MCF 10A (cell line): ENCODE measurements at regions of chr11 and their contacts with region 1.

Region 1: DNA sequence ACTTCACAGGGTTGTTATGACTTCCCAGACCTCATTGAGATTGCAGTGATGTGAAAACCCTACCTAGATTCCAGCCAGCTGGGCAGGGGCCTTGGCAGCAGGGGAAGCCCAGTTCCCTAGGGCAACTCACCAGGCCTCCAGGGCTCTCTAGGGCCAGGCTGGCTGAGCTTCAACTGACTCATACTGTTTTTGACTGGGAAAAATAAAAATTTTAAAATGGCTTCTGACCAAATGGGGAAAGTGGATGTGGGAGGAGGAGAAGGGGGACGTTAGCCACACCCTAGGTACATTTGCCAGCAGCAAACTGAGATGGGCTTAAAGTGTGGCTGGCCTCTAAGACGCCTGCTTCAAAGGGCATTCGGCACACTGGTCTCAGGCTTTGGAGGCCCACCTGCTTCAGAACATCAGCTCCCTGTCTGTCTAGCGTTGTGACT is 39.0 kb downstream of the BMAL1 start:
- DNase-seq: peak; percentile 85
- H3K4me3 Mint-ChIP-seq: no peak overlapping the region
- H3K27ac Mint-ChIP-seq: peak overlapping the region; percentile 87
- H3K4me1 Mint-ChIP-seq: peaks cover 64% of the 10 kb centered on the region
- H3K27me3 Mint-ChIP-seq: no peaks in the 10 kb centered on the region
- CTCF ChIP-seq: no peak

Region 2: DNA sequence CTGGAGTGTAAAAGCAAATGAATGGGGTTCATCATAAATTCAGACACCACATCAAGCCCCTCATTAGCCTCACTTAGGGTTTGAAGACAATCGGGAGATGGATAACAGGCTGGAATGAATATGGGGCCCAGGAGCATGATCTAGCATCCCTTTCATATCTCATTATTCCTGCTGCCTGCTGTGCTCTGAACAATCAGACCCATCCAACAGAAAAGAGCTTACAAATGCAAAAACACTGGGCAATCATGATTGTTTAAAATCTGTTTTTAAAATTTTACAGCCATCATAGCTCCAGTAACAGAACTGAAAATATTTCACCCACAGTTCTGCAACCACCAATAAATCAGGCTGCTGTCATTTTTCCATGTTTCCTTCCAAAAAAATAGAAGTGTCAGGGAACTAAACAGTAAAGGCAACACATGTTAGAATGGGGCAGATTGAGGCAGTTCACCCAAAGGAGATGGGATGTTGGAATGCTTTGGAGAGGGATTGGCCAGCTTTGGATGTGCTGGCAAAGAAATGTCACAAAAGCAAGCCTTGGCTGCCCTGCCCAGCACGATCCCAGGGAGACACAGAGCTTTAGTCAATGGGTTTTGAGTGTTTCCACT is 86.7 kb before region 1 on chr11:
- CTCF ChIA-PET with region 1: no interaction called
- POLR2A ChIA-PET with region 1: no interaction called
- intact Hi-C with region 1: no loop called
- DNase-seq: no peak
- H3K4me3 Mint-ChIP-seq: no peak overlapping the region
- H3K27ac Mint-ChIP-seq: no peak overlapping the region
- H3K4me1 Mint-ChIP-seq: peaks cover 6% of the 10 kb centered on the region
- H3K27me3 Mint-ChIP-seq: no peaks in the 10 kb centered on the region
- CTCF ChIP-seq: no peak

Region 3: DNA sequence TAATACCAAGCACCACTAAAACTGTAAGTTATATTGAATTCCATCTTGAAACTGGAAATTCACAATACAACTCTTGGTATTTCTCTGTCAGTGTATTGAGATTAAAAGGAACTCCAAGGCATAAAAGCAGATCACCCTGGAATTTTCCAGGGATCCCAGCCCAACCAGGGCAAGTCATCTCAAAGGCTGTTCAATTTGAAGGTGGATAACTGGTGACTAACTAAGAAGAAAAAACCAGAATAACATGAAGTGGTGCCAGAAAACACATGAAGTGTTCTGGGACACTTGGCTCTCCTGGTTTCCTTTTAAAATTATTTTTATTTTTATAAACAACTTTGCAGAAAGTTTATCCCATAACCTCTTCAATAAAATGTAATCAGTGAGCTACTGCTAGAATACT is 46.8 kb before region 1 on chr11:
- CTCF ChIA-PET with region 1: no interaction called
- POLR2A ChIA-PET with region 1: interaction called, 10 read pairs
- intact Hi-C with region 1: no loop called
- DNase-seq: peak; percentile 40
- H3K4me3 Mint-ChIP-seq: no peak overlapping the region
- H3K27ac Mint-ChIP-seq: peak overlapping the region; percentile 35
- H3K4me1 Mint-ChIP-seq: peaks cover 31% of the 10 kb centered on the region
- H3K27me3 Mint-ChIP-seq: no peaks in the 10 kb centered on the region
- CTCF ChIP-seq: no peak

Region 4: GRCh38 chr11:13329670-13330356 is 13.3 kb after region 1 on chr11:
- CTCF ChIA-PET with region 1: interaction called, 29 read pairs
- POLR2A ChIA-PET with region 1: interaction called, 13 read pairs
- intact Hi-C with region 1: no loop called
- DNase-seq: peak; percentile 62
- H3K4me3 Mint-ChIP-seq: no peak overlapping the region
- H3K27ac Mint-ChIP-seq: peak overlapping the region; percentile 8
- H3K4me1 Mint-ChIP-seq: peaks cover 44% of the 10 kb centered on the region
- H3K27me3 Mint-ChIP-seq: no peaks in the 10 kb centered on the region
- CTCF ChIP-seq: no peak

Region 5: DNA sequence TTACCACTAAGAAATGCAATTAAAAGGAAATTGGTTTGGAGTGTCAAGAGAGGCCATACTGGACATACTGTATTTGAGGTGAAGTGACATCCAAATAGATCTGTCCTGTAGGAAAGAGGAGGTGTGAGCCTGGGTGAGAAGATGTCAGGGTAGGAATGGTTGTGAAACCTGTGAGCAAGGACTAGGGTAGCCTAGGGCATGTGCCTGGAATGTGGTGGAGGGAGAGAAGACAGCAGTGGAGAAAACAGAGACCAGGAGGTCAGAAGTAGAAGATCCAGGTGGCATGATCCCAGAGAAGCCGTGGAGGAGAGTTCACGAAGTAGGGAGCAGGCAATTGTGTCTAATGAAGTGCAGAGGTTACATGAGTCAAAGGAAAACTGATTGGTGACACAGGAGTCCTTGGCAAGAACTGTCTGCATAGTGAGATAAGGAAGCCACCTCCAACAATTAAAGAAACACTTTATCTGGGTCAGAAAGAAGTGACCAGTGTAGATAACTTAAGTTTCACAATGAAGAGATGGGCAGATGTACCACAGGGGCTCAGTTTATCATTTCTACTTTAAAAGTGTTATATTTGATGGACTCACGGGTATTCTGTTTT is 236.1 kb after region 1 on chr11:
- CTCF ChIA-PET with region 1: no interaction called
- POLR2A ChIA-PET with region 1: no interaction called
- intact Hi-C with region 1: no loop called
- DNase-seq: no peak
- H3K4me3 Mint-ChIP-seq: no peak overlapping the region
- H3K27ac Mint-ChIP-seq: no peak overlapping the region
- H3K4me1 Mint-ChIP-seq: no peaks in the 10 kb centered on the region
- H3K27me3 Mint-ChIP-seq: no peaks in the 10 kb centered on the region
- CTCF ChIP-seq: no peak